ENCODE measurements at regions of chr1 and their contacts with region 1.

Region 1: DNA sequence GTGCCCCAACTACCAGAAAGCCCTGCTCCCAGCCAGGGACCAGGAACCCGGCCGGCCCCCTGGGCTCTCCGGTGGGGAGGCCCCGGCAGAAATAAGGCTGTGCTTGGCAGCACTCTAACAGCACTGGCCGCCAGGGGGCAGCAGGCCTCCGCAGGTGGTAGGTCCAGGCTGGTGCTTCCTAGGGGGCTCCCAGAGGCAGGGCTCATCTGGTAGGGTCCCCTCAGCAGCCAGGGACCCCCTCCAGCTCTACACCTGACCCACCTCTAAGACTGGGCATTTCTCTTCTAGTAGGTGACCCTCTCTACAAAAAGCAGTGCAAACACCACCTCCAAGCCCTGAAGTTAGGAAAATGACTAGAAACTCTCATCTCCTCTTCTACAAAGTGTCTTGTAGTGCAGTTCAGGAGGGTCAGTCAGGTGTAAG is 85.6 kb downstream of the STUM start:
- DNase-seq: peak; percentile 84
- ATAC-seq: peak; percentile 78
- H3K4me3 Mint-ChIP-seq: no peak overlapping the region
- H3K27ac Mint-ChIP-seq: peak overlapping the region; percentile 65
- H3K4me1 Mint-ChIP-seq: peaks cover 44% of the 10 kb centered on the region
- H3K27me3 Mint-ChIP-seq: no peaks in the 10 kb centered on the region

Region 2: DNA sequence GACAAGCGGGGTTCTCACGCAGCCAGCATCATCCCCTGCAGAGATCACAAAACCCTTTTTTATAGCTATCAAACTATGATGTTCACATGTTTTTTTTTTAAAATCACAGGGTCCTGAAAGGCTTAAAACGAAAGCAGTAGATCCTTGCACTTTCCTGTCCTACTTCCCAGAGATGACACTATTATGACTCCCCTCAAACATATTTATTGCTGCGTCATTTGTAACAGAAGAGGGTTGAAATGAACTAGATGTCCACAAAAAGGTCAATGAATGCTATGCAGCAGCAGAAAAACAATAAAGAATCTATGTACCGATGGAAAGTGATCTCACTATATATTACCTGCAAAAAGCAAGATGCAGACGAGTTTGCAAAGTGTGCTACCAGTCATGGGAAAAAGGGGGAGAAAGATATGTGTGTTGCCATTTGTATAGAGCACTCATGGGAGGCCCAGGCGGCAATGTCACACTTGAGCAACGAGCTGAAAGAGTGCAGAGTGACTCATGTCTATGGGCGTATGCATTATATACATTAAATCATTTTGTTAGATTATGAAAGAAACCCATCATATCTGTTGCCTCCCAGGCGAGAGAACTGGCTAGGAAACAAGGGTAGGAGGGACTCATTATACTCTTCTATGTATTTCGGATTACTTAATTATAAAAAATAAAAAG is 157.4 kb before region 1 on chr1:
- CTCF ChIA-PET with region 1: no interaction called
- POLR2A ChIA-PET with region 1: no interaction called
- DNase-seq: no peak
- ATAC-seq: no peak
- H3K4me3 Mint-ChIP-seq: no peak overlapping the region
- H3K27ac Mint-ChIP-seq: no peak overlapping the region
- H3K4me1 Mint-ChIP-seq: peaks cover 8% of the 10 kb centered on the region
- H3K27me3 Mint-ChIP-seq: peaks cover 9% of the 10 kb centered on the region

Region 3: DNA sequence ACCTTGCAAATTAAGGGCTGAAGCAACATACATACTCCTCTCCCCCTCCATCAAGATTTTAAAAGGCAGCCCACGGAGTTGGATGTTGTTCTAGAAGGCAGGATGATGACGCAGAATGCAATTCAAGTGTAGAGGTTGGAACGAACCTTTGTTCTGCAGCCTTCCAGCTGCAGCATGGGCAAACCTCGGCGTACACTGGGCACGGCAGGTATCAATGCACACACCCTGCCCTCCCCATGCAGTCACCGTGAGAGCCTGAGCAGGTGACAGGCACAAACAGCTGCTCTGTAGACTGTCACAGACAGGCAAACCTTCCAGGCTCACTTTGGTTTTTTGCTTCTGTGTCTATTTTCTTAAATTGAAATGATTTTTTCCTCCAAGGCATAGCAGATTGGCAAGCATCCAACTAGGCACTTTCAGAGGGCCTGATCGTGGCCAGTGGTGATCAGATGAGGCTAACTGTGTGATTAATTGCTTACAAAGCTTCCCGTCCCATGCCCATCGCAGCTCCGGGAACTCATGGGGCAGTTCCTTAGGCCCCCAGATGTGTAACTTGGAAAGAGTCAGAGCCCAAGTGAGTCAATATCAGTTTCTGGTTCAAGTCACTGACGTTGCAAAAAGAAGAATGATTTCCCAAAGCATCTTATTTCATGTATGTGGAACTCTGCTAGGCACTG is 22.6 kb after region 1 on chr1:
- CTCF ChIA-PET with region 1: interaction called, 16 read pairs
- POLR2A ChIA-PET with region 1: interaction called, 3 read pairs
- DNase-seq: no peak
- ATAC-seq: no peak
- H3K4me3 Mint-ChIP-seq: no peak overlapping the region
- H3K27ac Mint-ChIP-seq: peak overlapping the region; percentile 97
- H3K4me1 Mint-ChIP-seq: peaks cover 28% of the 10 kb centered on the region
- H3K27me3 Mint-ChIP-seq: no peaks in the 10 kb centered on the region

Region 4: GRCh38 chr1:226736908-226737818 is 103.0 kb after region 1 on chr1:
- CTCF ChIA-PET with region 1: interaction called, 13 read pairs
- POLR2A ChIA-PET with region 1: no interaction called
- DNase-seq: peak; percentile 69
- ATAC-seq: peak; percentile 43
- H3K4me3 Mint-ChIP-seq: peak overlapping the region; percentile 91
- H3K27ac Mint-ChIP-seq: peak overlapping the region; percentile 90
- H3K4me1 Mint-ChIP-seq: peaks cover 56% of the 10 kb centered on the region
- H3K27me3 Mint-ChIP-seq: no peaks in the 10 kb centered on the region

Measured in activated CD8-positive, alpha-beta T cell treated with anti-CD3 and anti-CD28 coated beads, Interleukin-2, amount 10 ng/mL, durations not matched to agents 7 days and 5 days (primary cell).